ENCODE measurements at regions of chr1 and their contacts with region 1.

Region 1: DNA sequence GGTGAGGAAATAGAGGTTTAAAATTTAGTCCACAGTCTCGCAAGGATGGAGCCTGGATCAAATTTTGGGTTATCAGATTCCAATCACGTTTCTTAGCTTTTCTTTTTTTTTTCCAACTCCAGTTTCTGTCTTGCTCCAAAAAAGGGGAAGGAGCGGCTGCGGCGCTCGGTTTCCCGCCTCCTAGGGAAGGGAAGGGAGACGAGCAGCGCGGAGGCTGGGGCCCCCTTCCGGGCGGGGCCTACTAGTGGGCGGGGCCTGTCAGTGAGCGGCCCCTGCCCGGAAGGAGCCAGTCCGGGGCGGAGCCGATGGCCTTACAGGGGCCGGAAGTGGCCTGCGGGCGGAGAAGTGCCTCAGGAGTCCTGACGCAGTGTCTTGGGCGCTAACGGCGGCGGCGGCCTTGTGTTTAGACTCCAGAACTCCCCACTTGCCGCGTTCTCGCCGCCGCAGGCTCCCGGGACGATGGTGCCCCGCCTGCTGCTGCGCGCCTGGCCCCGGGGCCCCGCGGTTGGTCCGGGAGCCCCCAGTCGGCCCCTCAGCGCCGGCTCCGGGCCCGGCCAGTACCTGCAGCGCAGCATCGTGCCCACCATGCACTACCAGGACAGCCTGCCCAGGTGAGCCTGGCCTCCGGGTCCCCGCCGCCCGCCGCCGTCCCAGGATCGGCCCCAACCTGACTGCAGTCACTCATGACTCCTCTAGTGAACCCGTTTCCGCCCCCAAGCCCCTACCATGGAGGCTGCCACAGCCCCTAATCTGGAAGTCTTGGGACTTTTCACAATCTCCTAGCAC is at the start of gene CPT2:
- DNase-seq: peak; percentile 98

Region 2: DNA sequence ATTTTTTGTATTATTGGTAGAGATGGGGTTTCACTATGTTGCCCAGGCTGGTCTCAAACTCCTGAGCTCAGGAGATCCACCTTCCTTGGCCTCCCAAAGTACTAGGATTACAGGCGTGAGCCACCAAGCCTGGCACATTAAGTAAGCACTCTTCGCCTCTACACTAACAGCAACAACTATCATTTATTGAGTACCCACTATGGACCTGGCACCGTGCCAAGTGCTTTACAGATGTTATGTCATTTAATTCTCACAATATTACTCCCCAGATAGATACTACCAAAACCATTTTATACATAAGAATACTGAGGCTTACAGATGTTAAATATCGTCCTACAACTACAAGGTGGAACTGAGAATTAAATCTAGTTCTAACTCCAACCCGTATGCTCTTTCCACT is 693.9 kb before region 1 on chr1:
- in situ Hi-C with region 1: no loop called
- DNase-seq: no peak

Region 3: DNA sequence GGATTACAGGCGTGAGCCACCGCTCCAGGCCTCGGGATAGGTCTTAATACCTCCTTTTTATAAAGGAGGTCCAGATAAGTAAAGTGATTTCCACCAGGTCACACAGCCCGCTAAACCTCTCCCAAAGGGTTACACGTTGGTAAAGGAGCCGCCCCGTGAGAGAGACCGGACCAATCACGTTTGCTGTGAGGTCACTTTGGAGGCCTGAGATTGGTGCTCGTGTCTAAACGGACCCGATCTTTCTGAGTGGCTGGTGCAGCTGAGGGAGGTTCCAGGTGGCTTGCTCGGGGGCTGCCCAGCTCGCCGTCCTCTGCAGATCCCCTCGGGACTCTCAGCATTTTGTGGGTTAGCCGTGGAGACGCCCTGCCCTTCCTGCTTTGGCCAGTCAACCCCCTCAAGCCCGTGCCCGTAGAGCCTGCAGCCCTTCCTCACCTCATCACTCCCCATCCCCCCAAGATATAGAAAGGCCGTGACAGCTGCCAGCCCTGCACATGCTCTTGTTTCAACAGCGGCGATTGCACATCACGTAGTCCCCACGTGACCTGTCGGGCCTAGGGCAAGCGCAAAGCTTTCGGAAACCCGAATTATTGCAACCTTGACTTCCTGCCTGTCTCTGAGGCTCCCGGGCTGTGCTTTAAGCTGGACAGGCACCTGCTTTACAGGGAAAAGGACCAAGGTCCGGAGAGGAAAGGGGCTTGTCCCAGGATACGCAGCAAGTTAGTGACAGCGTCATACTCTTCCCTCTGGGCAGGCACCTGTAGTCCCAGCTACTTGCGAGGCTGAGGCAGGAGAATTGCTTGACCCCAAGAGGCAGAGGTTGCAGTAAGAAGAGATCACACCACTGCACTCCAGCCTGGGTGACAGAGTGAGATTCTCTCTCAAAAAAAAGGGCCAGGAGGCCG is 493.5 kb before region 1 on chr1:
- in situ Hi-C with region 1: loop called (anchors 25 kb)
- DNase-seq: no peak